Posterior vena cava (tissue), 2 donors: ENCODE measurements at regions of chr1 and their contacts with region 1.

Region 1: GRCh38 chr1:99526926-99527477 is 118.9 kb upstream of the PALMD start:
- DNase-seq: no peak

Region 2: GRCh38 chr1:100443811-100444571 is 917.0 kb after region 1 on chr1:
- intact Hi-C with region 1: loop called in 1 of 2 experiments (anchors 10 kb)
- DNase-seq: no peak